ENCODE measurements at regions of chr7 and their contacts with region 1.

Region 1: GRCh38 chr7:99438573-99439480 is at the starts of genes CPSF4 and PTCD1:
- DNase-seq: peak; percentile 96
- ATAC-seq: peak; percentile 93
- H3K4me3 Mint-ChIP-seq: peak within 1 kb of the TSS; percentile 91
- H3K27ac Mint-ChIP-seq: peak within 1 kb of the TSS; percentile 98
- H3K4me1 Mint-ChIP-seq: peaks cover 36% of the 10 kb centered on the region
- H3K27me3 Mint-ChIP-seq: no peaks in the 10 kb centered on the region
- total RNA-seq, gene CPSF4: 56.1 to 57.9 TPM
- total RNA-seq, gene PTCD1: 4.7 to 7.7 TPM

Region 2: GRCh38 chr7:99040104-99040958 is 398.5 kb before region 1 on chr7:
- CTCF ChIA-PET with region 1: no interaction called
- POLR2A ChIA-PET with region 1: no interaction called
- intact Hi-C with region 1: no loop called
- DNase-seq: peak; percentile 75
- ATAC-seq: peak; percentile 79
- H3K4me3 Mint-ChIP-seq: no peak overlapping the region
- H3K27ac Mint-ChIP-seq: no peak overlapping the region
- H3K4me1 Mint-ChIP-seq: no peaks in the 10 kb centered on the region
- H3K27me3 Mint-ChIP-seq: no peaks in the 10 kb centered on the region

Region 3: GRCh38 chr7:99380032-99380822 is 58.6 kb before region 1 on chr7:
- CTCF ChIA-PET with region 1: no interaction called
- POLR2A ChIA-PET with region 1: no interaction called
- intact Hi-C with region 1: loop called in 1 of 2 experiments (anchors 1 kb)
- DNase-seq: peak; percentile 69
- ATAC-seq: peak; percentile 22
- H3K4me3 Mint-ChIP-seq: peak overlapping the region; percentile 78
- H3K27ac Mint-ChIP-seq: peak overlapping the region; percentile 96
- H3K4me1 Mint-ChIP-seq: peaks cover 62% of the 10 kb centered on the region
- H3K27me3 Mint-ChIP-seq: no peaks in the 10 kb centered on the region

Region 4: GRCh38 chr7:99392677-99393354 is 46.0 kb before region 1 on chr7:
- CTCF ChIA-PET with region 1: no interaction called
- POLR2A ChIA-PET with region 1: interaction called, 5 read pairs
- intact Hi-C with region 1: loop called in 1 of 2 experiments (anchors 5 kb)
- DNase-seq: peak; percentile 89
- ATAC-seq: peak; percentile 90
- H3K4me3 Mint-ChIP-seq: peak overlapping the region; percentile 50
- H3K27ac Mint-ChIP-seq: peak overlapping the region; percentile 80
- H3K4me1 Mint-ChIP-seq: peaks cover 20% of the 10 kb centered on the region
- H3K27me3 Mint-ChIP-seq: no peaks in the 10 kb centered on the region

Region 5: DNA sequence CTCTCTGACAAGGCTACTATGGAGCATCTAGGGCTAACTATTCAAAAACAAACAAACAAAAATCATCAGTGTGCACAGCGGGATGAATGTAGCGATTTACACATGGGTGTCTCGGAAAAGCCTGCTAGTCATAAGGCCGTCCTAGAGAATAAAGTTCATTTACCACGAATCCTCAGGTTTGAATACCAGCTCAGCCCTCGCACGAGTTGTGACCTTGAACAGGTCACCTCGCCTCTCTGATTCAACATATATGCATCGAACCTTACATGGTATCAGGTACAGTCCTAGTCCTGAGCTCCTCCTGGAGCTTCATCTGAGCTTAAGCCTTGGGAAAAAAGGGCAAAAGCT is 26.6 kb after region 1 on chr7:
- CTCF ChIA-PET with region 1: no interaction called
- POLR2A ChIA-PET with region 1: no interaction called
- intact Hi-C with region 1: loop called (anchors 1 kb)
- DNase-seq: peak; percentile 31
- ATAC-seq: peak; percentile 4
- H3K4me3 Mint-ChIP-seq: peak overlapping the region; percentile 85
- H3K27ac Mint-ChIP-seq: peak overlapping the region; percentile 84
- H3K4me1 Mint-ChIP-seq: peaks cover 34% of the 10 kb centered on the region
- H3K27me3 Mint-ChIP-seq: no peaks in the 10 kb centered on the region

Region 6: DNA sequence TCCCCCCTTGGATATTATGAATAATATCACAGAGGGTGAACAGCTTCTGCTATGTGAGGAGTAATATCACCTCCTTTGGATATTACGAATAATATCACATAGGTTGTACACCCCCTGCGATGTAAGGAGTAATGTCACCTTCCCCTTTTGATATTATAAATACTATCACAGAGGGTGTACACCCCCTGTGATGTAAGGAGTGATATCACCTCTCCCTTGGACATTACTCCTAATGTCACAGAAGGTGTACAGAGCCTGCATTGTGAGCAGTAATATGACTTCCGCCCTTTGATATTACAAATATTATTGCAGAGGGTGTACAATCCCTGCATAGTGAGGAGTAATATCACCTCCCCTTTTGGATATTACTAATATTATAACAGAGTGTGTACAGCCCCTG is 150.0 kb after region 1 on chr7:
- CTCF ChIA-PET with region 1: no interaction called
- POLR2A ChIA-PET with region 1: no interaction called
- intact Hi-C with region 1: no loop called
- DNase-seq: no peak
- ATAC-seq: peak; percentile 41
- H3K4me3 Mint-ChIP-seq: no peak overlapping the region
- H3K27ac Mint-ChIP-seq: no peak overlapping the region
- H3K4me1 Mint-ChIP-seq: no peaks in the 10 kb centered on the region
- H3K27me3 Mint-ChIP-seq: no peaks in the 10 kb centered on the region